Activated CD8-positive, alpha-beta memory T cell treated with anti-CD3 and anti-CD28 coated beads, Interleukin-2, amount 10 ng/mL, durations not matched to agents 7 days and 5 days (primary cell): ENCODE measurements at regions of chr10 and their contacts with region 1.

Region 1: DNA sequence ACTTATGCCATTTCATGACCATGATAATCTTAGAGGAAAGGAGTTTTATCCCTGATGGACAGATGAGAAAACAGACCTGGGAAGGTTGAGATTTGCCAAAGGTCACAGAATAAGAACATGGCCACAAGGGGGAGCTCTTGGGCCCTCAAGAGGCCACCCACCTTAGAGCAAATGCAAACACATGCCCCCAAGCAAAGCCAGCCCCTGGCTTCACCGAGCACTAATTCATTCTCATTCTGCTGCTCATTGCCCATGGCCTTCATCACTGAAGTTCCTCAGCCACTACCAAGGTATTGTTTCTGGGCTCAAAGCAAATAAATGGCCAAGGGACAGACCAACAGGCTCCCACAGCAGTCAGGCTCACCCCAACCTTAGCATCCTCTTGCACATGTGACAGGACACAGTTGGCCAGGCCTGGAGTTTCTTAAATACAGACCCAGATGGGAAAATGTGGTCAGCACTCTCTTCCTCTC is 44.2 kb downstream of the PDLIM1 start:
- DNase-seq: peak; percentile 82
- ATAC-seq: peak; percentile 70
- H3K4me3 Mint-ChIP-seq: no peak overlapping the region
- H3K27ac Mint-ChIP-seq: peak overlapping the region; percentile 16
- H3K4me1 Mint-ChIP-seq: peaks cover 37% of the 10 kb centered on the region
- H3K27me3 Mint-ChIP-seq: peaks cover 13% of the 10 kb centered on the region

Region 2: GRCh38 chr10:95183271-95184230 is 63.1 kb before region 1 on chr10:
- CTCF ChIA-PET with region 1: interaction called, 33 read pairs
- DNase-seq: peak; percentile 81
- ATAC-seq: peak; percentile 98
- H3K4me3 Mint-ChIP-seq: peak overlapping the region; percentile 65
- H3K27ac Mint-ChIP-seq: peak overlapping the region; percentile 54
- H3K4me1 Mint-ChIP-seq: peaks cover 8% of the 10 kb centered on the region
- H3K27me3 Mint-ChIP-seq: peaks cover 49% of the 10 kb centered on the region

Region 3: GRCh38 chr10:95257849-95258248 is 11.2 kb after region 1 on chr10:
- CTCF ChIA-PET with region 1: interaction called, 14 read pairs
- DNase-seq: no peak
- ATAC-seq: no peak
- H3K4me3 Mint-ChIP-seq: no peak overlapping the region
- H3K27ac Mint-ChIP-seq: no peak overlapping the region
- H3K4me1 Mint-ChIP-seq: peaks cover 17% of the 10 kb centered on the region
- H3K27me3 Mint-ChIP-seq: peaks cover 13% of the 10 kb centered on the region

Region 4: DNA sequence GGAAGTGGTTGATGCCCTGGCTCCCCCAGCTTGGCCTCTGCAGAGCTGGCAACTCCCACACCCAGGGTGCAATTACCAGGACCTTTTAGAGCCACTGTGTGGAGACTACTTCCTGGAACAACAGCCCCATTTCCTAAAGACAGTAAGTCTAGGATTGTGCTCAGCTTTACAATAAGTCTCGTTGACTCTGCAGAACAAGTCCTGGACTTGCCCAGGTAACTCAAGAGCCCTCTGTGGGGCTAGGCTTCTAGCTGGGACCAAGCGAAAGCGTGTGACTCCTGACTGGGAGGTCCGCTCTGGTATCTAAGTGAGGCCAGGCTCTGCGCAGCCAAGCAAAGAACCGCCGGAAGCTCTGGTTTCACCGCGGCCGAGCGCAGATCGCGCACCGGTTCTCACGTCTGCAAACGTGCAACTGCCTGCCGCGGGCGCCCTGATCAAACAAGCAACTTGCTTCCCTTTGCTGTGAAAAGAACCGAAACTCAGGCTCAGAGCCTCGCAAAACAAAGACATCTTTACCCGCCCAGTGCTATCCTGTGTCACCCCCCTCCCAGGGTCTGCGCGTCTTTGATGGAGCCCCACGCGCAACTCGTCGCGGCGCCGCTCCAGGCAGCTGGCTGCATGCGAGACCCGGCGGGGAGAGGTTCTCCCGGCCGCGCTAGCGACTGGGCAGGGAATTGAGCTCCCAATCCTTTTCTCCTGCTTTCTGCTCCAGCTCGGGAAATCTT is 48.6 kb after region 1 on chr10:
- CTCF ChIA-PET with region 1: interaction called, 29 read pairs
- DNase-seq: peak; percentile 86
- ATAC-seq: peak; percentile 81
- H3K4me3 Mint-ChIP-seq: peak overlapping the region; percentile 68
- H3K27ac Mint-ChIP-seq: peak overlapping the region; percentile 92
- H3K4me1 Mint-ChIP-seq: peaks cover 44% of the 10 kb centered on the region
- H3K27me3 Mint-ChIP-seq: peaks cover 28% of the 10 kb centered on the region

Region 5: DNA sequence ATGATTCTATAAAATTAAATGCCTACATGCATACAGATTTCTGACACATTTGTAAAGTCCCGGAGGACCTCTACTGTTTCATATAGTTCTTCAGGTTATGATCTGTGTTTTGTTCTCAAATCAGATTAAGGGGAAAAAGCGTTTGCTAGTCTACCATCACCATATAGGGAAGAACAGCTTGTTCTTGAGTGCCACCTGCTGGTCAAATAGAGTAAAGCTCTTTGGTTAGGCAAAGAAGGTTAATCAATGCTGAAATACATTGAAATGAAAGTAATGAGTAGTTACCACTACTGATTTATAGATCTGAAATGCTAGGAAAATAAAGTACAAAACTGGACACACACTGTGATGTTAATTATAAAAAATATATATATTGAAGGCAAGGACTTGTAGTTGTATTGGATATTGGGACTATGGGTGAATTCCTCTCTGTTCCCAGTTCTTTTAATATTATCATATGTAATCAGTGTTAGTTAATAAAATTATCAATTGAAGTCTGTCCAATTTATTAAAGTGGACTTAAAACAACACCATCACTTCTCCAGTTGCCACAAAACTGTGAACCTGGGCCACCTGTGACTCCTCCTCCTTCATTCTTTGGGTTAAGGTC is 116.8 kb after region 1 on chr10:
- CTCF ChIA-PET with region 1: interaction called, 246 read pairs
- DNase-seq: peak; percentile 63
- ATAC-seq: peak; percentile 78
- H3K4me3 Mint-ChIP-seq: no peak overlapping the region
- H3K27ac Mint-ChIP-seq: no peak overlapping the region
- H3K4me1 Mint-ChIP-seq: no peaks in the 10 kb centered on the region
- H3K27me3 Mint-ChIP-seq: peaks cover 32% of the 10 kb centered on the region